ENCODE measurements at regions of chr16 and their contacts with region 1.

Region 1: GRCh38 chr16:81767987-81768592 is 11.0 kb upstream of the PLCG2 start:
- DNase-seq: peak; percentile 92
- ATAC-seq: peak; percentile 95
- H3K4me3 ChIP-seq: no peak overlapping the region
- H3K27ac ChIP-seq: peak overlapping the region; percentile 36; the same call in 1 of the 2 replicates
- H3K4me1 ChIP-seq: peaks cover 11% of the 10 kb centered on the region; the same call in 1 of the 2 replicates
- H3K27me3 ChIP-seq: no peaks in the 10 kb centered on the region
- CTCF ChIP-seq: no peak

Region 2: GRCh38 chr16:81737885-81738786 is 30.0 kb before region 1 on chr16:
- CTCF ChIA-PET with region 1: no interaction called
- POLR2A ChIA-PET with region 1: no interaction called
- intact Hi-C with region 1: loop called (anchors 2 kb)
- DNase-seq: peak; percentile 86
- ATAC-seq: peak; percentile 96
- H3K4me3 ChIP-seq: peak overlapping the region; percentile 54; the same call in 1 of the 2 replicates
- H3K27ac ChIP-seq: no peak overlapping the region
- H3K4me1 ChIP-seq: peaks cover 5% of the 10 kb centered on the region; the same call in 1 of the 2 replicates
- H3K27me3 ChIP-seq: no peaks in the 10 kb centered on the region
- CTCF ChIP-seq: peak; percentile 78

Region 3: GRCh38 chr16:81838794-81839193 is 70.7 kb after region 1 on chr16:
- CTCF ChIA-PET with region 1: no interaction called
- POLR2A ChIA-PET with region 1: no interaction called
- intact Hi-C with region 1: loop called (anchors 1 kb)
- DNase-seq: peak; percentile 63
- ATAC-seq: peak; percentile 84
- H3K4me3 ChIP-seq: no peak overlapping the region
- H3K27ac ChIP-seq: no peak overlapping the region
- H3K4me1 ChIP-seq: peaks cover 5% of the 10 kb centered on the region
- H3K27me3 ChIP-seq: no peaks in the 10 kb centered on the region
- CTCF ChIP-seq: no peak

Region 4: DNA sequence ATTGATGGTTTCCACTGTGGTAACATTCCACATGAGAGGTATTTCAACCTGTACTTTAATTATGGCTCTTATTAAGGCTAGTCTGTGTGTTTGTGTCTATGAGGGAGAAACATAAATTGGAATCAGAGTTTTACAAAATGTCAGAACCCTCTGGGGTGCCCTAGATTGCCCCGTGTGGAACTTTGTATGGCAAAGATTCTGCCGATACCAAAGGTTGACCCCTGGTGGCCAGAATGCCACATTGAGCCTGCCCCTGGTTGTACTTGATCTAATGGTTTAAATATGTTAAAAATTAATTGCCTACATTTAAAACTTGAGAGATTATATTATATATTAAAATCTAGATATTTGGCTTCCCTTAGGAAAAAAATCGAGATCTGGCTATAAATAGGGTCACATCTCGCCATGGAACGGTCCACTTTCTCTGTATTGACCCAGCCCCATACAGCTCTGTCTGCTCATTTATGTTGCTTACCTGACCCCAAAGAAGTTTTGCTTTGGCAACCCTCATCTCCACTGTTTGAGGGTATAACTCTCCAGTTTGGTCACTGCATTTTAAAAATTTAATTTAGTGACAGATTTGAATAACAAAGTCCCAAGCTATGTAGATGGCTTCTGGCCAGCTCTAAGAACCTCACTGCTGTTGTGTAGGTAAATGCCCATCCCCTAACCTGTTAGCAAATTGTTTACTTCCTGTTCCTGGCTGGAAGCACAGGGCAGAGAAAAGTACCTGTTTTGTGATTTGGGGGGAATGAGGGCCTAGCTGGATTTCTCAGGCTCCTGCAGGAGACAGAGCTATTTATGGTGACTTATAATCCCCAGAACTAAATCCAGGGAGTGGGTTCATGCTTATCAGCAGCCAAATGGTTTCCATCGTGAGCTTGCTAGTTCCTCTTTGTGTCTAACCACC is 106.0 kb after region 1 on chr16:
- CTCF ChIA-PET with region 1: no interaction called
- POLR2A ChIA-PET with region 1: no interaction called
- intact Hi-C with region 1: loop called (anchors 5 kb)
- DNase-seq: peak; percentile 58
- ATAC-seq: peak; percentile 76
- H3K4me3 ChIP-seq: no peak overlapping the region
- H3K27ac ChIP-seq: no peak overlapping the region
- H3K4me1 ChIP-seq: no peaks in the 10 kb centered on the region
- H3K27me3 ChIP-seq: no peaks in the 10 kb centered on the region
- CTCF ChIP-seq: peak; percentile 66

Measured in PC-3 (cell line).